Calu3 (cell line): ENCODE measurements at regions of chr12 and their contacts with region 1.

Region 1: GRCh38 chr12:131825146-131825892 is 2.9 kb upstream of the MMP17 start:
- DNase-seq: no peak
- H3K4me3 Mint-ChIP-seq: no peak overlapping the region
- H3K27ac Mint-ChIP-seq: no peak overlapping the region
- H3K4me1 Mint-ChIP-seq: no peaks in the 10 kb centered on the region
- H3K27me3 Mint-ChIP-seq: peaks cover 51% of the 10 kb centered on the region
- CTCF ChIP-seq: no peak

Region 2: DNA sequence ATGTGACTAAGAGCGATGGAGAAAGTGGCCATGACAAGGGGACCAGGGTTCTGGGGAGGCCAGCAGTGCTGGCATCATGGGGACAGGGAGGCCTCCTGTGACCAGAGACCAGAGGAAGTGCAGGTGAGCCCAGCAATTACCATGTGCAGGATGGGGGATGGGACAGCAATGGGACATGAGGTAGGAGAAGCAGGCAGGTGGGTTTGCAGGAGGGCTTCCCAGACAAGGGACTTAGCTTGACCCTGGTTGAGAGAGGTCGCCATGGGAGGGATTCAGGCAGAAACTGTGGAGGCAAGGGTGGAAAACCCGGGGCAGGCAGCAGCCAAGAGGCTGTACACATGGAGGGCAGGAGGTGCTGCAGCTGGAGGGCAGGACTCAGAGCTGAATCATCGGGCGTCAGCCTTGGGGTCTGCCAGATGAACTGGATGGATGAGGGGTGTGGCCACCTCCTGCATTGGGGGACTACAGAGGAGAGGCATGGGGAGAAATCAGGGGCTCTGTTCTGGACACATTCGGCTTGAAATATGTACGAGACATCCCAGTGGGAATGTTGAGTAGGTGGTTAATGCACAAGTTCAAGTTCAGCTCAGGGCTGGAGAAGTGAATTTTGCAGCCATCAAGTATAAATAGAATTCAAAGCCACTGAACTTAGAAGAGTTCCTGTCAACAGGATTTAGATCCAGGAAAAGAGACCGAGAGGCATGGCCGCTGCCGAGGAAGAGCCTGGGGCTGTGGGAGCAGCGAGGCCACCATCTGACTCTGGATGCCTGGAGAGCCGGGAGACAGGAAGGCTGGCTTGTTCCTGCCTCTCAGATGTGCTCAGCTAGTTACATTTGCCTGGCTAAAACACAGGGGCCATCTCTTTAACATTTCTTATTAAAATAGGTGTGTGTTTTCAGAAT is 77.8 kb before region 1 on chr12:
- CTCF ChIA-PET with region 1: no interaction called
- intact Hi-C with region 1: no loop called
- DNase-seq: no peak
- H3K4me3 Mint-ChIP-seq: no peak overlapping the region
- H3K27ac Mint-ChIP-seq: no peak overlapping the region
- H3K4me1 Mint-ChIP-seq: peaks cover 8% of the 10 kb centered on the region
- H3K27me3 Mint-ChIP-seq: no peaks in the 10 kb centered on the region
- CTCF ChIP-seq: no peak

Region 3: GRCh38 chr12:131773582-131774221 is 51.6 kb before region 1 on chr12:
- CTCF ChIA-PET with region 1: interaction called, 11 read pairs
- intact Hi-C with region 1: no loop called
- DNase-seq: no peak
- H3K4me3 Mint-ChIP-seq: no peak overlapping the region
- H3K27ac Mint-ChIP-seq: no peak overlapping the region
- H3K4me1 Mint-ChIP-seq: no peaks in the 10 kb centered on the region
- H3K27me3 Mint-ChIP-seq: no peaks in the 10 kb centered on the region
- CTCF ChIP-seq: no peak

Region 4: DNA sequence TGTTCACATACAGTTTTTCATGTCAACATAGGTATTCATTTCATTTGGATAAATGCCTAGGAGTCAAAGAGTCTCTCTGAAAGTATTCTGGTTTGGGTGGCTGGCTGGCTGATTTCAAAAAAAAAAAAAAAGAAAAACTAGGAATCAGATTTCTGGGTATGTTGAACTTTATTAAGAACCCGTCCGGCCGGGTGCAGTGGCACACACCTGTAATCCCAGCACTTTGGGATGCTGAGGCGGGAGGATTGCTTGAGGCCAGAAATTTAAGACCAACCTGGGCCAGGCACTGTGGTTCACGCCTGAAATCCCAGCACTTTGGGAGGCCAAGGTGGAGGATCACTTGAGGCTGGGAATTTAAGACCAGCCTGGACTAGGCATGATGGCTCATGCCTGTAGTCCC is 140.6 kb after region 1 on chr12:
- CTCF ChIA-PET with region 1: interaction called, 10 read pairs
- intact Hi-C with region 1: no loop called
- DNase-seq: no peak
- H3K4me3 Mint-ChIP-seq: no peak overlapping the region
- H3K27ac Mint-ChIP-seq: no peak overlapping the region
- H3K4me1 Mint-ChIP-seq: peaks cover 9% of the 10 kb centered on the region
- H3K27me3 Mint-ChIP-seq: no peaks in the 10 kb centered on the region
- CTCF ChIP-seq: no peak